IMR-90 (cell line): ENCODE measurements at regions of chr2 and their contacts with region 1.

Region 1: GRCh38 chr2:232183279-232183678 is 195.3 kb upstream of the ALPP start:
- DNase-seq: no peak
- ATAC-seq: no peak
- H3K4me3 ChIP-seq: no peak overlapping the region
- H3K27ac ChIP-seq: no peak overlapping the region
- H3K4me1 ChIP-seq: no peaks in the 10 kb centered on the region
- H3K27me3 ChIP-seq: no peaks in the 10 kb centered on the region
- CTCF ChIP-seq: no peak
- POLR2A ChIP-seq: no peak
- RAD21 ChIP-seq: no peak

Region 2: GRCh38 chr2:230912724-230913123 is 1270.6 kb before region 1 on chr2:
- CTCF ChIA-PET with region 1: no interaction called
- POLR2A ChIA-PET with region 1: interaction called, 11 read pairs
- dilution Hi-C with region 1: no loop called
- in situ Hi-C with region 1: no loop called
- intact Hi-C with region 1: no loop called
- DNase-seq: no peak
- ATAC-seq: no peak
- H3K4me3 ChIP-seq: no peak overlapping the region
- H3K27ac ChIP-seq: no peak overlapping the region
- H3K4me1 ChIP-seq: peaks cover 6% of the 10 kb centered on the region
- H3K27me3 ChIP-seq: peaks cover 17% of the 10 kb centered on the region
- CTCF ChIP-seq: no peak
- POLR2A ChIP-seq: no peak
- RAD21 ChIP-seq: no peak